ENCODE measurements at regions of chrX and their contacts with region 1.

Region 1: DNA sequence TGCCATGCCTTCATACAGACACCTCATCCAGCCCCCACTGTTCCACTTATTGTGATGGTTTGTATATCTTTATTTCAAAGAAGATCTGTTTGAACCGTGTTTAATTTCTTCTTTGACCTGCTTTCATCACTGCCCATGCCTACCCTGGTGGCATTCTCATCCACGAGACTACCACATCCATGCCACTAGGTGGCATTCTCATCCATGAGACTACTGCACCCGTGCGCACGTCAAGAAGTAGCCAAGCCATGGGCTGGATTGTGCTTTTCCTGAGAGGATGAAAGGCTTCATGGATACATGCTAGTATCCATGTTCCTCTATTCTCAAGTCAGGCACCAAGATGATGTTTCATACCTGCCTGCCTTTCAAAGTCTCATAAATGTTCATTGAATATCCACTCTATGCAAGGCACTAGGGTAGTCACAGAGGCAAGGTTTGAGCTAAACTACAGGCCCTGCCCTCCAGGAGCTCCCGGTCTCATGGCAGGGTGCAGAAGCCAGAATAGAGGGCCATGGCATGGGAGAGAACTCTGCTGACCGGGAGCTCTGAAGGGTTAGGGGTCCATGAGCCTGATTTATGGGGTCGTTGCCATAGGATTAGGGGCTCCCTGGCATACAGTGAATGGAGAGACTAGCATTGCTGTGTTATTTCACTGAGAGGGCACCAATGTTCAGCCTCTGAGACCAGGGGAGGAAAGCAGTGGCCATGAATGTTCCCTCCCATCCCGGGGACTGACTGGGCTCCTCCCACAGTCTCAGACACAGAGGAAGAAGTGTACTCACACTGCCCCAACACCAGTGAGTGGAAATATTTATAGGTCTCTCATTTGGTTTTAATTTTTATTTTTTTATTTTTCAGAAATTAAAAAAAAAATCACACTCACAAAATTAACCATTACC is 24.8 kb upstream of the EOLA2 start:
- DNase-seq: peak in 1 of 2 donors; percentile 59
- ATAC-seq: peak; percentile 87
- H3K4me3 ChIP-seq: no peak overlapping the region
- H3K27ac ChIP-seq: peak overlapping the region in 1 of 2 donors; percentile 48
- H3K4me1 ChIP-seq: no peaks in the 10 kb centered on the region
- H3K27me3 ChIP-seq: no peaks in the 10 kb centered on the region

Region 2: GRCh38 chrX:149903889-149904748 is 59.0 kb before region 1 on chrX:
- intact Hi-C with region 1: no loop called
- DNase-seq: no peak
- ATAC-seq: no peak
- H3K4me3 ChIP-seq: no peak overlapping the region
- H3K27ac ChIP-seq: no peak overlapping the region
- H3K4me1 ChIP-seq: no peaks in the 10 kb centered on the region
- H3K27me3 ChIP-seq: no peaks in the 10 kb centered on the region

Region 3: DNA sequence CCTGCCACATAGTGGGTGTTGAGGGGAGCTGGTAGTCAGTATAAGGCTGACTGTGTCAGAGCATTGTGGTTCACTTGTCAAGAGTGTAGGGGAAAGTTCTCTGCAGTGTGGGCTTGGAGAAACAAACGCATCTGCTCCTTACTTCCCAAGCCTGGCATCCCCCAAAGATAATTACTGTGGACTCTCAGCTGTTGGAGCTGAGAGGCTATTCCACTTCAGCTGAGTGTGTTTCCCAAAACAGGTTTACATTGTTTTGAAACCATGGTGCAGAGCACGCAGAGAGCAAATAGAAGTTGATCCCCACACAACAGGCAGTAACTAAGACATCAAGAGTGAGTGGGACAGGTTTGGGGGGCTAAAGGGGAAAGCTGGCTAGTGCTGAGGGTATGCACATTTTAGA is 156.2 kb after region 1 on chrX:
- intact Hi-C with region 1: no loop called
- DNase-seq: no peak
- ATAC-seq: no peak
- H3K4me3 ChIP-seq: no peak overlapping the region
- H3K27ac ChIP-seq: no peak overlapping the region
- H3K4me1 ChIP-seq: no peaks in the 10 kb centered on the region
- H3K27me3 ChIP-seq: no peaks in the 10 kb centered on the region

Region 4: GRCh38 chrX:150486011-150486410 is 522.9 kb after region 1 on chrX:
- intact Hi-C with region 1: loop called in 1 of 2 experiments (anchors 5 kb)
- DNase-seq: peak in 1 of 2 donors; percentile 63
- ATAC-seq: no peak
- H3K4me3 ChIP-seq: no peak overlapping the region
- H3K27ac ChIP-seq: no peak overlapping the region
- H3K4me1 ChIP-seq: no peaks in the 10 kb centered on the region
- H3K27me3 ChIP-seq: no peaks in the 10 kb centered on the region

Region 5: GRCh38 chrX:150587585-150588503 is 624.7 kb after region 1 on chrX:
- intact Hi-C with region 1: loop called in 1 of 2 experiments (anchors 5 kb)
- DNase-seq: no peak
- ATAC-seq: no peak
- H3K4me3 ChIP-seq: no peak overlapping the region
- H3K27ac ChIP-seq: no peak overlapping the region
- H3K4me1 ChIP-seq: no peaks in the 10 kb centered on the region
- H3K27me3 ChIP-seq: no peaks in the 10 kb centered on the region

Measured in aorta (tissue), 5 donors.